B cell (primary cell): ENCODE measurements at regions of chr14 and their contacts with region 1.

Region 1: GRCh38 chr14:100285021-100285912 is 21.0 kb downstream of the SLC25A29 start:
- DNase-seq: peak; percentile 89
- ATAC-seq: peak; percentile 91
- H3K4me3 ChIP-seq: peak overlapping the region in 4 of 5 experiments; percentile 74 to 89 (median 82)
- H3K4me3 Mint-ChIP-seq: peak overlapping the region; percentile 84
- H3K27ac ChIP-seq: peak overlapping the region; percentile 80 to 90
- H3K27ac Mint-ChIP-seq: peak overlapping the region; percentile 79
- H3K4me1 ChIP-seq: peaks cover 12% of the 10 kb centered on the region in 2 donors
- H3K4me1 Mint-ChIP-seq: peaks cover 13% of the 10 kb centered on the region
- H3K27me3 ChIP-seq: no peaks in the 10 kb centered on the region
- H3K27me3 Mint-ChIP-seq: no peaks in the 10 kb centered on the region
- CTCF ChIP-seq: peak; percentile 99

Region 2: GRCh38 chr14:100239840-100240724 is 45.2 kb before region 1 on chr14:
- CTCF ChIA-PET with region 1: interaction called, 22 read pairs
- POLR2A ChIA-PET with region 1: interaction called, 6 read pairs
- intact Hi-C with region 1: loop called (anchors 1 kb)
- DNase-seq: peak; percentile 93
- ATAC-seq: peak; percentile 52
- H3K4me3 ChIP-seq: peak overlapping the region; percentile 72 to 91 (median 87)
- H3K4me3 Mint-ChIP-seq: peak overlapping the region; percentile 87
- H3K27ac ChIP-seq: peak overlapping the region; percentile 55 to 97
- H3K27ac Mint-ChIP-seq: peak overlapping the region; percentile 95
- H3K4me1 ChIP-seq: peaks cover 38 to 47% of the 10 kb centered on the region in 2 donors
- H3K4me1 Mint-ChIP-seq: peaks cover 55% of the 10 kb centered on the region
- H3K27me3 ChIP-seq: no peaks in the 10 kb centered on the region
- H3K27me3 Mint-ChIP-seq: no peaks in the 10 kb centered on the region
- CTCF ChIP-seq: peak; percentile 67

Region 3: DNA sequence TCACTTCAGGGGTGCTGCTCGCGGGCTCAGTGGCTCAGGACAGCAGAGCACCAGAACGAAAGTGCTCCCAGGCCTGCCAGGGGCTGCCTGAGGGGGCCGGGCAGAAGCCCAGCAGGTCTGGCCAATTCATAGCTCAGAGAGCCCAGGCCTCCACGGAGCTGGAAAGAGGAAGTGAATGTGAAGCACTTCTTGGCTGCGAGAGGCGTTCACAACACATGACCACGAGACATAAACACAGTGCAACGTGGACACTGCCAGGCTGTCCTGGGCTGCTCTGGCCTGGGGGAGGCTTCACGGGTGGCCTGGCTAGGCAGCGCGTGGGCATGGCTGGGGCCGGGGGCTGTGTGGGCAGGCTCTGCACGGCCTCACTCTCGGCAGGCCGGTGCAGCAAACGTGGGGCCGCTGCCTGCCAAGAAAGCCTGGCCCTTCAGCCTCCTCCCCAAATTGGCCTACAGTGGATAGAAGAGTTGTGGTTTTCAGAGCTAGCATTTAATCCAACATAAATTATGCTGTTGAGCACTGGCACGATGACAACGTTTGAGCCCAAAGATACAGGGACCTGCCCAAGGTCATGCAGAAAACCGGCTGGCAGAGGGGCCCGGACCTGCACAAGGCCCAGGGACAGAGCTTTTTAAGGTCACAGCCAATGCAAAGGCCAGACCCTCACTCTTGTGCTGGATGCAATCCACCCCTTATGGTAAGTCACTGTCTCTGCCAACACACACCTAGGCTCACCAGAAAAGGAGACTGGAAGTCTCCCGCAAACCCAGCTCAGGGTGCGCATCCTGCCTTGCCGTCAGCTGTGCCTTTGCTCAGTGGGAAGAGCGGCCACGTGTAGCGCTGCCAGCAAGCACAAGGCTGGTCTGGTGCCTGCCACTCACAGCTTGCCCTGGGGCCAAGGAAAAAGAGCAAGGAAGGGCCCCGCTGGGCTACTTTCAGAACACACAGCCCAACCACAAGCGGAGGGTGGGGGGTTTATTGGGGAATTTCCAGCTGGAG is 12.3 kb after region 1 on chr14:
- CTCF ChIA-PET with region 1: interaction called, 51 read pairs
- POLR2A ChIA-PET with region 1: interaction called, 3 read pairs
- intact Hi-C with region 1: loop called (anchors 1 kb)
- DNase-seq: peak; percentile 79
- ATAC-seq: peak; percentile 86
- H3K4me3 ChIP-seq: peak overlapping the region in 3 of 5 experiments; percentile 16 to 32 (median 28)
- H3K4me3 Mint-ChIP-seq: peak overlapping the region; percentile 82
- H3K27ac ChIP-seq: peak overlapping the region; percentile 21 to 48
- H3K27ac Mint-ChIP-seq: peak overlapping the region; percentile 97
- H3K4me1 ChIP-seq: peaks cover 35 to 57% of the 10 kb centered on the region in 2 donors
- H3K4me1 Mint-ChIP-seq: peaks cover 60% of the 10 kb centered on the region
- H3K27me3 ChIP-seq: no peaks in the 10 kb centered on the region
- H3K27me3 Mint-ChIP-seq: no peaks in the 10 kb centered on the region
- CTCF ChIP-seq: no peak

Region 4: GRCh38 chr14:100306420-100307219 is 21.4 kb after region 1 on chr14 and contains the start of gene SLC25A29:
- CTCF ChIA-PET with region 1: interaction called, 8 read pairs
- POLR2A ChIA-PET with region 1: interaction called, 3 read pairs
- intact Hi-C with region 1: loop called (anchors 1 kb)
- DNase-seq: peak; percentile 84
- ATAC-seq: peak; percentile 94
- H3K4me3 ChIP-seq: peak within 1 kb of the TSS in 4 of 5 experiments; percentile 70 to 81 (median 80)
- H3K4me3 Mint-ChIP-seq: peak within 1 kb of the TSS; percentile 94
- H3K27ac ChIP-seq: peak within 1 kb of the TSS in 1 of 2 donors; percentile 46
- H3K27ac Mint-ChIP-seq: peak within 1 kb of the TSS; percentile 83
- H3K4me1 ChIP-seq: peaks cover 20 to 32% of the 10 kb centered on the region in 2 donors
- H3K4me1 Mint-ChIP-seq: peaks cover 21% of the 10 kb centered on the region
- H3K27me3 ChIP-seq: peaks cover 0 to 3% (median 0%) of the 10 kb centered on the region in 4 experiments
- H3K27me3 Mint-ChIP-seq: no peaks in the 10 kb centered on the region
- CTCF ChIP-seq: no peak
- total RNA-seq, gene SLC25A29: 99.9 and 108 TPM in 2 replicates

Region 5: GRCh38 chr14:100317912-100318808 is 32.9 kb after region 1 on chr14:
- CTCF ChIA-PET with region 1: interaction called, 15 read pairs
- POLR2A ChIA-PET with region 1: interaction called, 3 read pairs
- intact Hi-C with region 1: loop called (anchors 1 kb)
- DNase-seq: peak; percentile 82
- ATAC-seq: peak; percentile 97
- H3K4me3 ChIP-seq: peak overlapping the region; percentile 48 to 70 (median 56)
- H3K4me3 Mint-ChIP-seq: peak overlapping the region; percentile 78
- H3K27ac ChIP-seq: peak overlapping the region; percentile 44 to 56
- H3K27ac Mint-ChIP-seq: peak overlapping the region; percentile 89
- H3K4me1 ChIP-seq: peaks cover 6 to 12% of the 10 kb centered on the region in 2 donors
- H3K4me1 Mint-ChIP-seq: peaks cover 5% of the 10 kb centered on the region
- H3K27me3 ChIP-seq: no peaks in the 10 kb centered on the region
- H3K27me3 Mint-ChIP-seq: no peaks in the 10 kb centered on the region
- CTCF ChIP-seq: peak; percentile 95

Region 6: DNA sequence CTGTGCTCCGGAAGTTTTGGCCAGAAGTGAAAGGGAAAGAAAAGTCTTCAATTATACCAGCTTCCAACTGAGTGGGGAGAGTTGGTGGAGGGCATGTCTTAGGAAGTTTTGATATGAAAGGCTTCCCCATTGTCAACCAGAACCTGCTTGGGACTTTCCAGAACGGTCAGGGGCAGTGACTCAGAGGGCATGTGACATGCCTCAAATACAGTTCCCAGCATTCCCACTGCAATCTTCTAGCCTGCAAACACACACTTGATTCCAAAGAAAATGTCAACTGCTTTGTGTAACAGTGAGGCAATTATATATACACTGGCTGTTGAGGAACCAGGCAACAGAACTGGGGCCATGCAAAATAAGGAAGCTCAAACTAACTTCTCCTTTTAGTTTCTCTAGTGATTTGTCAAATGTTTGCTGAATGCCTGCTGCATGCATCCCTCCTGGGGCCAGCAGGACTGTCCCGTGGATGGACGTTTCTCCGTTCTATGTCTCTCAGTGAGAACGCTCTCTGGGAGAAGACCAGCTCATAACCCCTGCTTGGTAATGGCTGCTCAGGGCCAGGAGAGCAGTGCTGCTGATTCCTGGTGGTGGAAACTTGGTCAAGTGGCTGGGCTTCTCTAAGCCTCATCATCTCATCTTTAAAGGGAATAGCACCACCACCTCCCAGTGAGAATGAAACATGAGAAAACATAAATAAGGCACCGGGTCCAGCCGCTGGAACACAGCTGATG is 56.2 kb after region 1 on chr14:
- CTCF ChIA-PET with region 1: interaction called, 6 read pairs
- POLR2A ChIA-PET with region 1: no interaction called
- intact Hi-C with region 1: loop called (anchors 2 kb)
- DNase-seq: peak; percentile 69
- ATAC-seq: peak; percentile 95
- H3K4me3 ChIP-seq: peak overlapping the region in 1 of 5 experiments; percentile 19
- H3K4me3 Mint-ChIP-seq: peak overlapping the region; percentile 62
- H3K27ac ChIP-seq: peak overlapping the region; percentile 75 to 78
- H3K27ac Mint-ChIP-seq: peak overlapping the region; percentile 93
- H3K4me1 ChIP-seq: peaks cover 15 to 22% of the 10 kb centered on the region in 2 donors
- H3K4me1 Mint-ChIP-seq: peaks cover 24% of the 10 kb centered on the region
- H3K27me3 ChIP-seq: no peaks in the 10 kb centered on the region
- H3K27me3 Mint-ChIP-seq: no peaks in the 10 kb centered on the region
- CTCF ChIP-seq: no peak

Region 7: DNA sequence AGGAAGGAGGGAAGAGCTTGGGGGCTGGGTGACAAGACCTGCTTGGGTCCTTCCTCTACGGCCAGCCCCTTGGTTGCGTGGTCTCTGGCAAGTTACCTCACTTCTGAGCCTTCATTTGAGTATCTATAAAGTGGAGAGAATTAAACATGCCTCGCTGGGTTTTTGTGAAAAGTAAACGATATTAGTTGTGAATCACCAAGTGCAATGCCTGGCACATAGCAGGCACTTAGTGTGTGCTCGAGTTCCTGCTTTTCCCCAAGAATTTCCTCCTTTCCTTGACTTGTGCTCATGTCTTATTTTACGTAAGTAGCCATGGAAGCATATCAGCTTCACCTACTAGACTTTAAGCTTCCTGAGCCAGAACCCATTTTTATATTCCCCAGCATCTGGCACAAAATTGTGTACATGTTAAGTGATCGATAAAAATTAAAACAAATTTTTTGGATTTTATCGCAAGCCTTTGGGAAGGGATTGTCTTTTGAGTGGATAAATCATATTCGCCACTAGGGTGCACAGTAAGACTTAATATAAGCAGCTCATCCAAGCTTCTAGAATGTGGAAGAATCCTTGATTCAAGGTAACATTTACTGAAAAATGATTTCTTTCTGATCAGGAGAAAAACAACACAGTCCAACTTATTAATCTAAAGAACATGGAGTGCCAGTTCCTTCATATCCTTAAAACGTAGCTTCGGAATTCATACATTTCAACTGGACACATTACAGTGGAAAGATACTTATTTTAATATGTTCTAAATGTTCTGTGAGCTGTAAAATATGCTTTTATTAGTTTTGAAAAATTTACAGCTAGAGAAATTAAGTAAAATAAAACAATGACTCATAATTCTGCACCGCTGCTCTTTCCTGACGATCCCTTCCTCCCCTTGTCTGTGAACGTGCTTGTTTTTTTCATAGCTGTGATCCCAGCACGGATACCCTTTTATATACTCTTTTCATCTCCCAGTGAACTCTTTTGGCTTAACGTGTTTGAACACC is 99.8 kb after region 1 on chr14:
- CTCF ChIA-PET with region 1: interaction called, 13 read pairs
- POLR2A ChIA-PET with region 1: no interaction called
- intact Hi-C with region 1: no loop called
- DNase-seq: no peak
- ATAC-seq: no peak
- H3K4me3 ChIP-seq: no peak overlapping the region
- H3K4me3 Mint-ChIP-seq: no peak overlapping the region
- H3K27ac ChIP-seq: no peak overlapping the region
- H3K27ac Mint-ChIP-seq: no peak overlapping the region
- H3K4me1 ChIP-seq: peaks cover 0 to 2% of the 10 kb centered on the region in 2 donors
- H3K4me1 Mint-ChIP-seq: no peaks in the 10 kb centered on the region
- H3K27me3 ChIP-seq: no peaks in the 10 kb centered on the region
- H3K27me3 Mint-ChIP-seq: no peaks in the 10 kb centered on the region
- CTCF ChIP-seq: no peak

Region 8: GRCh38 chr14:101458526-101459391 is 1173.5 kb after region 1 on chr14:
- CTCF ChIA-PET with region 1: no interaction called
- POLR2A ChIA-PET with region 1: no interaction called
- intact Hi-C with region 1: no loop called
- DNase-seq: no peak
- ATAC-seq: no peak
- H3K4me3 ChIP-seq: no peak overlapping the region
- H3K4me3 Mint-ChIP-seq: no peak overlapping the region
- H3K27ac ChIP-seq: no peak overlapping the region
- H3K27ac Mint-ChIP-seq: no peak overlapping the region
- H3K4me1 ChIP-seq: peaks cover 0 to 5% of the 10 kb centered on the region in 2 donors
- H3K4me1 Mint-ChIP-seq: peaks cover 4% of the 10 kb centered on the region
- H3K27me3 ChIP-seq: peaks cover 0 to 33% (median 5%) of the 10 kb centered on the region in 4 experiments
- H3K27me3 Mint-ChIP-seq: peaks cover 47% of the 10 kb centered on the region
- CTCF ChIP-seq: no peak